ENCODE measurements at regions of chr14 and their contacts with region 1.

Region 1: DNA sequence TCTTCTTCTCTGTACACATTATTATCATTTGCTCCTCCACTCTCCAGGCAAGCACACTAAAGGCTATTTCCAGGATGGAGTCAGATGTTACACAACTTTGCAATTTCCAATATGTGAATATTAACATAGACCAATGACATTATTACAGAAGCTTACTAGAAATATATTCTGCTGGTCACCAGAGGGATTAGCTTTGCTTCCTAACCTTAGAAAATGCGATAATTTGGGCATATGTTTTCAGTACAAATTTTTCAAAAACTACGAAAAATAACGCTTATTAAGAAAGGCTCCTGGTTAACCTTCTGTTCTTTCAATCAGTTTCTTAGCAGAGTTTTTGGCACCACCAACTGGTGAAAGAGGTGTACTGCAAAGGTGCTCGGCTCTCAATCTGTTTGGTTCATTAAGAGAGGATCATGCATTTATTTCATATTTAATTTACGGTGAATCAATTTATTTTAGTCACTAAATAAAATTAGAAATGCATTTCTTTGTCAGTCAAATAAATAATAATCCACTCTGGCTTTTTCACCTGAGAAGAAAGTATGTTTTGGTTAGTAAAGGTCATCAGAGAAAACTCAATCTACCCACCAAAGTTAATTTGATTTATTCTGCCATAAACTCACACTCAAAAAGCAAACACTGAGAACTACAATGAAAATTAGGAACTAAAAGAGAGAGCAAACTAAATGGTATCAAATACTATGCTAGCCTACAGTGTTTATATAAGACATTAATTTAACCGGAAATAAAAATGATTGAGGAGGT is 39.2 kb downstream of the EFCAB11 start:
- DNase-seq: peak; percentile 65
- H3K4me3 ChIP-seq: no peak overlapping the region
- H3K27ac ChIP-seq: no peak overlapping the region
- H3K4me1 ChIP-seq: peaks cover 13 to 29% (median 22%) of the 10 kb centered on the region in 4 donors
- H3K27me3 ChIP-seq: no peaks in the 10 kb centered on the region
- CTCF ChIP-seq: peak; percentile 88 to 97 (median 95)
- EP300 ChIP-seq: no peak
- POLR2A ChIP-seq: no peak

Region 2: GRCh38 chr14:88955455-88955854 is 959.8 kb before region 1 on chr14:
- in situ Hi-C with region 1: no loop called
- intact Hi-C with region 1: no loop called
- DNase-seq: no peak
- H3K4me3 ChIP-seq: no peak overlapping the region
- H3K27ac ChIP-seq: no peak overlapping the region
- H3K4me1 ChIP-seq: peaks cover 0 to 1% (median 0%) of the 10 kb centered on the region in 4 donors
- H3K27me3 ChIP-seq: no peaks in the 10 kb centered on the region
- CTCF ChIP-seq: no peak
- EP300 ChIP-seq: no peak
- POLR2A ChIP-seq: no peak

Region 3: GRCh38 chr14:89027097-89027740 is 888.1 kb before region 1 on chr14:
- in situ Hi-C with region 1: loop called in 3 of 4 experiments (anchors 10 to 25 kb)
- intact Hi-C with region 1: loop called (anchors 5 kb)
- DNase-seq: peak; percentile 55
- H3K4me3 ChIP-seq: peak overlapping the region; percentile 25 to 62 (median 46)
- H3K27ac ChIP-seq: peak overlapping the region in 2 of 4 donors; percentile 0 to 8
- H3K4me1 ChIP-seq: peaks cover 0 to 13% (median 11%) of the 10 kb centered on the region in 4 donors
- H3K27me3 ChIP-seq: peaks cover 30% of the 10 kb centered on the region
- CTCF ChIP-seq: peak; percentile 76 to 95 (median 91)
- EP300 ChIP-seq: no peak
- POLR2A ChIP-seq: no peak

Region 4: GRCh38 chr14:89165189-89166181 is 749.8 kb before region 1 on chr14:
- in situ Hi-C with region 1: loop called in 1 of 4 experiments (anchors 25 kb)
- intact Hi-C with region 1: no loop called
- DNase-seq: no peak
- H3K4me3 ChIP-seq: peak overlapping the region in 1 of 4 donors; percentile 20
- H3K27ac ChIP-seq: peak overlapping the region; percentile 29 to 59 (median 44)
- H3K4me1 ChIP-seq: peaks cover 0 to 15% (median 0%) of the 10 kb centered on the region in 4 donors
- H3K27me3 ChIP-seq: no peaks in the 10 kb centered on the region
- CTCF ChIP-seq: no peak
- EP300 ChIP-seq: no peak
- POLR2A ChIP-seq: no peak

Region 5: GRCh38 chr14:89303457-89304435 is 611.5 kb before region 1 on chr14:
- in situ Hi-C with region 1: loop called in 1 of 4 experiments (anchors 10 kb)
- intact Hi-C with region 1: no loop called
- DNase-seq: peak; percentile 64
- H3K4me3 ChIP-seq: no peak overlapping the region
- H3K27ac ChIP-seq: peak overlapping the region; percentile 87 to 93 (median 91)
- H3K4me1 ChIP-seq: peaks cover 17 to 38% (median 28%) of the 10 kb centered on the region in 4 donors
- H3K27me3 ChIP-seq: no peaks in the 10 kb centered on the region
- CTCF ChIP-seq: no peak
- EP300 ChIP-seq: peak; percentile 76
- POLR2A ChIP-seq: peak; percentile 36

Region 6: DNA sequence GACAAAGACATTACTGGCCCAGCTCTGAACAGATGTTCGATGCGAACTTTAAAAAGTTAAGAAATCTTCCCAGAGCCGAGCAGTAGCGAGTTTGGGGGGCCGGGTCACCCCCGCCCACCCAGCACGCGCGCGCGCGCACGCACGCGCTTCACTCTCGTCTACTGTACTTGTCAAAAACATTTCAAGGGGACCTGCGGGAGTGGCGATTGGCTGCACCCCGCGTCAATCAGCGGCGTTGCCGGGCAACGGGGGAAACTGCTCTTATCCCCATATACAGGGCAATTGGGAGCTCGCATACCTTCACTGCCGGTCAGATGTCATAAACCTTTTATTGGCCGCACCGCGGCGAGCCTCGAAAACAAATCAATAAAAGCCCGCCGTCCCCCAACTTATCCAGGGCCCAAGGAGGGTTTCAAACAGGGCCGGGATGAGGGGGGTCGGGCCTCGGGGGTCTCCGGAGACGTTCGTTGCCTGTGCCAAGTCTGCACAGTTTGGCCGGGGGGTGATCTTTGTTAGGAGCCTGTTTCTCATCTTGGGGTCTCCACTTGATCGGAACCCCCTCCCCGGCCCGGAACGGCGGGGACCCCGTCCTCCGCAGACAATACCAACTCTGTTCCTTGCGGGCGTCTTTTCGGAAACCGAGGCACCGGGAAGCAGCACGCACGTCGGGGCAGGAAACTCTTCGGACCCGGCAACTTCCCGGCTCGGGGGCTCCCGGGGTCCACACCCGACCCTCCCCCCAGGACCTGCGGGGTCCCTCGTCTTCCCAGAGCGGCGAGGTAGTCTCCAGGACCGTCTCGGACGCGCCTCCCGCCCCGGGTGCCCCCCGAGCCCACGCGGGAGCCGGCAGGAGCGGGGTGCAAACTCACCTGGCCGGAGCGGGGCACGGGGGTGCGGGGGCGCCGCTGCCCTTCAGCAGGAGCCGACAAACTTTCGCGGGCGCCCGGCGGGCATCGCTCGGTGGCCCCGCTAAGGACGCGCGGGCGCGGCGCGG is 499.0 kb before region 1 on chr14:
- in situ Hi-C with region 1: loop called in 1 of 4 experiments (anchors 25 kb)
- intact Hi-C with region 1: no loop called
- DNase-seq: peak; percentile 100
- H3K4me3 ChIP-seq: peak overlapping the region; percentile 65 to 99 (median 82)
- H3K27ac ChIP-seq: peak overlapping the region; percentile 98 to 99 (median 98)
- H3K4me1 ChIP-seq: peaks cover 16 to 52% (median 30%) of the 10 kb centered on the region in 4 donors
- H3K27me3 ChIP-seq: no peaks in the 10 kb centered on the region
- CTCF ChIP-seq: no peak
- EP300 ChIP-seq: no peak
- POLR2A ChIP-seq: peak; percentile 58

Measured in transverse colon (tissue), 4 donors.